PC-3 (cell line): ENCODE measurements at regions of chr11 and their contacts with region 1.

Region 1: GRCh38 chr11:74473382-74474173 is 6.2 kb upstream of the KCNE3 start:
- DNase-seq: no peak
- ATAC-seq: no peak
- H3K4me3 ChIP-seq: no peak overlapping the region
- H3K27ac ChIP-seq: no peak overlapping the region
- H3K4me1 ChIP-seq: no peaks in the 10 kb centered on the region
- H3K27me3 ChIP-seq: no peaks in the 10 kb centered on the region
- CTCF ChIP-seq: no peak

Region 2: GRCh38 chr11:74492974-74493790 is 19.6 kb after region 1 on chr11 and contains the start of gene LIPT2:
- CTCF ChIA-PET with region 1: no interaction called
- POLR2A ChIA-PET with region 1: interaction called, 47 read pairs
- intact Hi-C with region 1: no loop called
- DNase-seq: peak; percentile 99
- ATAC-seq: peak; percentile 98
- H3K4me3 ChIP-seq: peak within 1 kb of the TSS; percentile 92
- H3K27ac ChIP-seq: peak within 1 kb of the TSS; percentile 92
- H3K4me1 ChIP-seq: peaks cover 17% of the 10 kb centered on the region
- H3K27me3 ChIP-seq: no peaks in the 10 kb centered on the region
- CTCF ChIP-seq: no peak
- total RNA-seq, gene LIPT2: 9.4 and 11.3 TPM in 2 replicates

Region 3: DNA sequence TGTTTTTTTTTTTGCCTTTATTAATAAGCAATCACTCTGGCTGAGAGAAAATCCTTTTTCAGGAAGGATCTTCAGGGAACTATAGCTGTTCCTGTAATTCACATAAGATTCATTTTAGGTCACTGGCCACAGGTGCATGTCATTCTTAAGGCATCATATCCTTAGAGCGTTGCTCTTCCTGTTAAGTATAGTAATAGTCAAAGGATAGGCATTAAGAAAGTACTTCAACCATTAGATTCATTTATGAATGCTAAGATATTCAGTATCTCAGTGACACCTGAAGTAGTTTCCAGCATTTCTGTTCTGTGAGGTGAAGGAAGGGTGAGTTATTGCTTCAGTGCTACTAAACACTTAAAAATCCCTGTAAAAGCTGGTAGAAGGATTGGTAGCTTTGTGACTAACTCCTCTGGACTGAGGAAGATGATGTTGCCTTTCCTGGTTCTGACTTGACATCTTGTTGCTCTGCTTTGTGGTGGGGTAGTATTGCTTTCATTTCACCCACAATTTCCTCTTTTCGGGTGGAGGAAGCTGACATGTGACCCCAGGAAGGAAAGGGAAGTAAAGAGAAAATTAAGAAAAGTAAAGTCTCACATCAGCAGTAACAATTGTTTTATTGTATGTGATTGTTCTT is 309.8 kb after region 1 on chr11:
- CTCF ChIA-PET with region 1: no interaction called
- POLR2A ChIA-PET with region 1: no interaction called
- intact Hi-C with region 1: no loop called
- DNase-seq: peak; percentile 84
- ATAC-seq: peak; percentile 94
- H3K4me3 ChIP-seq: peak overlapping the region; percentile 25; the same call in 1 of the 2 replicates
- H3K27ac ChIP-seq: peak overlapping the region; percentile 24
- H3K4me1 ChIP-seq: peaks cover 13% of the 10 kb centered on the region
- H3K27me3 ChIP-seq: no peaks in the 10 kb centered on the region
- CTCF ChIP-seq: no peak

Region 4: GRCh38 chr11:75597636-75598035 is 1124.1 kb after region 1 on chr11:
- CTCF ChIA-PET with region 1: interaction called, 11 read pairs
- POLR2A ChIA-PET with region 1: no interaction called
- intact Hi-C with region 1: no loop called
- DNase-seq: peak; percentile 71
- ATAC-seq: peak; percentile 86
- H3K4me3 ChIP-seq: no peak overlapping the region
- H3K27ac ChIP-seq: no peak overlapping the region
- H3K4me1 ChIP-seq: peaks cover 8% of the 10 kb centered on the region
- H3K27me3 ChIP-seq: no peaks in the 10 kb centered on the region
- CTCF ChIP-seq: peak; percentile 94